Tibial artery (tissue), 4 donors: ENCODE measurements at regions of chr2 and their contacts with region 1.

Region 1: DNA sequence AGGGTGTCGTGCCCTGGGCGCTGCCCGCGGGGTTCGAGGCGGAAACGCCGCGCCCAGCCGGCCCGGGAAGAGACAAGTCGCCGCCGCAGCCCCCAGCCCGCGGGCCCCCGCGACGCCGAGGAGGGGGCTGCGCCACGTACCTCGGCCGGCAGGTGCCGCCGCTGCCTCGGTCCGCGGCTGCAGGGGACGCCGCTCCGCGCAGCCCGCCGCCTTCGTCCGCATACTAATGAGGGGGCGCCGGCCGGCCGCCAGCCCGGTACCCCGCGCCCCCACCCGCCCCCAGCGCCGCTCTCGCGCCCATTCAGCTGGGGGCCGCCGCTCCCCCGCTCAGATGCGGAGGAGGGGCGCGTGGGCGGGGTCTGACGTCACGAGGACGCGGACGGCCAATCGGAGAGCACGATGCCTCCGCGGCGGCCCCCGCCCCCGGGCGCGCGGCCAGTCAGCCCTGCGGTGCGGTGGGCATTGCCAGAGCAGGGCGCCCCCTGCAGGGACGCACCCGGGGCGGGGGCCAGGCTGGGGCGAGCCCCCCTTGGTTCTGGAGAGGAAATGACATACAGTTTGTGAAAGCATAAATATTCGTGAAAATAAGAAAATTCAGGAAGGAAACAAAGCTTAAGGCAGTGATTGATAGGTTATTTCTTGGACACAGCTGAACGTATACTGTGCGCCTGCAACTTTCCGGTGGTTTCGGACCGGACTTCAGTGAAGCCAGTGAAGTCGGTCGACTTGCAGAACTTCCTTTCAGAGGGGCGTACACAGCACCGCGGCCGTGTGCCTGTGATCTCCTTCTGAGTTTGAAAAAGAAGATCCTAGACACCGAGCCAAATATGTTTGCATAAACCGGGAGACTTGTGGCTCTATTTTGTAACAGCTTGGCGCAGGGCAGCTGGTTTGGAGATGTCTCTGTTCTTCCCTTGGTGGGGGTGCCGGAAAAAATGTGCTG is at the start of gene ST3GAL5:
- DNase-seq: peak; percentile 86 to 93
- H3K4me3 ChIP-seq: peak within 1 kb of the TSS; percentile 61 to 76
- H3K27ac ChIP-seq: peak within 1 kb of the TSS; percentile 71 to 77
- H3K4me1 ChIP-seq: peaks cover 0 to 37% (median 23%) of the 10 kb centered on the region in 4 donors
- H3K27me3 ChIP-seq: no peaks in the 10 kb centered on the region
- CTCF ChIP-seq: peak; percentile 52 to 64

Region 2: GRCh38 chr2:85843543-85843942 is 45.4 kb before region 1 on chr2:
- intact Hi-C with region 1: no loop called
- DNase-seq: no peak
- H3K4me3 ChIP-seq: no peak overlapping the region
- H3K27ac ChIP-seq: no peak overlapping the region
- H3K4me1 ChIP-seq: no peaks in the 10 kb centered on the region
- H3K27me3 ChIP-seq: no peaks in the 10 kb centered on the region
- CTCF ChIP-seq: peak in 1 of 2 experiments; percentile 15

Region 3: DNA sequence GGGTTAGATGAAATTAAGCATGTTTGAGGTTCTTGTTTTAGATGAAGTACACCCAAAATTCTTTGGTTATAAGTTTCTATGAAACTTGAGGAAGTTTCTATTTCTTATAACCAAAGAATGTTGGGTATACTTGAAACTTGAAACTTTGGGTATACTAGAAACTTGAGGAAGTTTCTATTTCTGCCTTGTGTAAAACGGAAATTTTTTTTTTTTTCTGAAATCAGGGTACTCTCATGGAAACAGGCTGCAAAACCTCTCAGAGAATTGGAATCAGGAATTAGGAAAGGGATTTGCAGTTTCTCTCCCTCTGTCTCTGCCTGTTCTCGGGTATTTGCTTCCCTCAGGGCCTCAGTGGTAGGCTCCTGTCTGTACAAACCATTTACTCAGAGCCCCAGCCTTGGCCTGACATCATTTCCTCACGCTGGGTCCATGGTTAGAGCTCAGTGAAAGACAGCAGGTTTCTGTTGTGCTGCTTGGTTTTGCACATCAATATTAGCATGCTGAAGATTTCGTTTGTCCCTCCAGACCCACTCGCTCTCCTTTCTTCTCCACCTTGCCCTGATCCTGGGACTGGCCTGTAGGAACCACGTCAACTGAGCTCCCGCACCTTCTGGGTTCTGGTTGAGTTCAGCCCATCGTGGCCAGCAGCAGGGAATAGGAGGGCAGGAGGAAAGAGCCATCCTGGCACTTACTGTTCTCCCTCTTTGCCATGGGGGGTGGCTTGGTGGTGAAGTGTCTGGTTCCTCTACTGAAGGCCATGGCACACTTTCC is 110.3 kb after region 1 on chr2:
- intact Hi-C with region 1: loop called (anchors 10 kb)
- DNase-seq: peak in 1 of 2 donors; percentile 65
- H3K4me3 ChIP-seq: peak overlapping the region; percentile 14 to 34
- H3K27ac ChIP-seq: peak overlapping the region; percentile 83 to 87
- H3K4me1 ChIP-seq: peaks cover 0 to 56% (median 48%) of the 10 kb centered on the region in 4 donors
- H3K27me3 ChIP-seq: no peaks in the 10 kb centered on the region
- CTCF ChIP-seq: no peak

Region 4: GRCh38 chr2:86020984-86021383 is 132.0 kb after region 1 on chr2:
- intact Hi-C with region 1: no loop called
- DNase-seq: peak; percentile 89 to 93
- H3K4me3 ChIP-seq: no peak overlapping the region
- H3K27ac ChIP-seq: peak overlapping the region; percentile 38 to 44
- H3K4me1 ChIP-seq: peaks cover 0 to 16% (median 9%) of the 10 kb centered on the region in 4 donors
- H3K27me3 ChIP-seq: no peaks in the 10 kb centered on the region
- CTCF ChIP-seq: no peak

Region 5: DNA sequence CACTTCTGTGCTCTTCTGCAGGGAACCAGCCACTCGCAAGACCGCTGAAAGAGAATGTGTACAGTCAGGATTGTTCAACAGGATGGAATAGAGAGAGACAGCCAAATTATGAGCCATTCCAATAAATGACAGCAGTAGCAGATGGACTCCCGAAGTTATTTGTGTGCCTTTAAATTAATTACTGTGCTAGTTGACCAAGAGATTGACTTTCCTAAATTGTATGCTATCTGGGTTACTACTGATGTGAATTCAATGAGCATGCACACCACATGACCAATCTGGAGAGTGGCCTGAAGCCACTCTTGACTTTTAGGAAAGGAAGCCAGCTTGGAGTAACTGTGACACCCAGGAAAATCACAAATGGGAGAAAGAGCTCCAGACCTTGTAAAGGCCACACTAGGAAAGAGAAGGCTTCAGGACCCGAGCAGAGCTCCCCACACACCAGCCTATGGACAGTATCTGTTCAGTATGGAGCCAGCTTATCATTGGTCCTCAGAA is 621.5 kb after region 1 on chr2:
- intact Hi-C with region 1: no loop called
- DNase-seq: no peak
- H3K4me3 ChIP-seq: no peak overlapping the region
- H3K27ac ChIP-seq: no peak overlapping the region
- H3K4me1 ChIP-seq: peaks cover 0 to 9% (median 0%) of the 10 kb centered on the region in 4 donors
- H3K27me3 ChIP-seq: no peaks in the 10 kb centered on the region
- CTCF ChIP-seq: no peak